Activated CD4-positive, alpha-beta T cell treated with anti-CD3 and anti-CD28 coated beads for 36 hours (primary cell): ENCODE measurements at regions of chr12 and their contacts with region 1.

Region 1: DNA sequence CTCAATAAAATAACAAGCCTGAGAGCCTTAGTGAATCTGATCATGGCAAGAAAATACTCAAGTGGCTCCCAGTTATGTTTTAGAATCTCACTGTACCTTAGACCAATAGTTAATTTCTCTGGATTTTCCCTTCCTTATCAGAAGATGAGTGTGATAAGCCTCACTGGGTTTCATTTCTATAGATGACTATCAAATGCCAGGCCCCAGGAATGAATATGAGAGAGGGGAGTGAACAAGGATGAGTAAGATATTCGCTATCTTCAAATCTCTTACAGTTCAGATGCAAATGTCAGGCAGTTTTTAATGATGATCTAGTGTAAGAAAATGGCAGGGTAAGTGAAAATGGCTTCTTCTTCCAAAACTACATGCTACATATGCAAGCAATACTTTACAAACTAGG is 26.1 kb upstream of the OR10P1 start:
- DNase-seq: no peak
- ATAC-seq: peak; percentile 93
- H3K4me3 Mint-ChIP-seq: no peak overlapping the region
- H3K27ac Mint-ChIP-seq: no peak overlapping the region
- H3K4me1 Mint-ChIP-seq: peaks cover 13% of the 10 kb centered on the region
- H3K27me3 Mint-ChIP-seq: peaks cover 28% of the 10 kb centered on the region

Region 2: GRCh38 chr12:55467836-55468235 is 142.8 kb before region 1 on chr12:
- CTCF ChIA-PET with region 1: no interaction called
- POLR2A ChIA-PET with region 1: no interaction called
- intact Hi-C with region 1: no loop called
- DNase-seq: no peak
- ATAC-seq: no peak
- H3K4me3 Mint-ChIP-seq: no peak overlapping the region
- H3K27ac Mint-ChIP-seq: no peak overlapping the region
- H3K4me1 Mint-ChIP-seq: no peaks in the 10 kb centered on the region
- H3K27me3 Mint-ChIP-seq: peaks cover 13% of the 10 kb centered on the region

Region 3: GRCh38 chr12:55582066-55582465 is 28.5 kb before region 1 on chr12:
- CTCF ChIA-PET with region 1: no interaction called
- POLR2A ChIA-PET with region 1: no interaction called
- intact Hi-C with region 1: no loop called
- DNase-seq: no peak
- ATAC-seq: no peak
- H3K4me3 Mint-ChIP-seq: no peak overlapping the region
- H3K27ac Mint-ChIP-seq: no peak overlapping the region
- H3K4me1 Mint-ChIP-seq: no peaks in the 10 kb centered on the region
- H3K27me3 Mint-ChIP-seq: peaks cover 23% of the 10 kb centered on the region

Region 4: DNA sequence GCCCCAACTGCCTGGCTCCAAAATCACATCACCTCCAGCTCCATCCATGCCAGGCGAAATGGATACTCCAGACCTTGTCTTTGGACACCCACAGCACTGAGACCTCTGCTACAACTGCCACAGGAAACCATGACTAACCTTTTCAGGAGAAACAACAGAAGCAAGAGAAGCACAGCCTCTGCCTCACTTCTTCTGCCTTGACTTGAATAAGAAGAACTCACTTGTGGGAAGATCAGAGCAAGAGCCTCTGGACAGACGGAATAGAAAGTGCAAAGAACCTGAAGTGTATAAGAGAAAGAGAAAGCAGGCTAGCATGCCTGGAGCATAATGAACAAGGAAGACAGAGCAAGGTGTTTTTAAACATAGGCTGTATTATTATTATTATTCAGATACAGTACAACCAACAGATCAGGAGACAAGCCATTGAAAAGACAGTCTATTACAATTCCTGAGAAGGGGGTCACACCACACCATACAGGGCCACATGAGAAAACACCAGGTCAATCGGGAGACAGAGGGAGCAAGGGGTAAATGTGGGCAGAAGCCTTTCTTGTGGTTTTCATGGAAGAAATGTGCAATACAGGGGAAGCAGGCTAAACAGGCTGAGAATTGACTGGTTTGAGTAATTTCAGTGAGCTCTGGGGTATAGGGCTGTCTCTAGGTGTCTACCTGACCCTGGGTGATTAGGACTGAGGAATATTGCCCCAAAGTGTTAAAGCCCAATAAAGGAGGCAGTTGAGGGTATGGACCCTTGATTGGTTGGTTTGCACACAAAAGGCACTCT is 18.7 kb after region 1 on chr12:
- CTCF ChIA-PET with region 1: no interaction called
- POLR2A ChIA-PET with region 1: no interaction called
- intact Hi-C with region 1: loop called in 1 of 2 experiments (anchors 1 kb)
- DNase-seq: peak; percentile 47
- ATAC-seq: peak; percentile 78
- H3K4me3 Mint-ChIP-seq: peak overlapping the region; percentile 7
- H3K27ac Mint-ChIP-seq: peak overlapping the region; percentile 57
- H3K4me1 Mint-ChIP-seq: peaks cover 21% of the 10 kb centered on the region
- H3K27me3 Mint-ChIP-seq: peaks cover 24% of the 10 kb centered on the region